OCI-LY7 (cell line): ENCODE measurements at regions of chr11 and their contacts with region 1.

Region 1: GRCh38 chr11:44731685-44732430 is 5.1 kb downstream of the TSPAN18 start:
- DNase-seq: no peak
- H3K4me3 ChIP-seq: no peak overlapping the region
- H3K27ac ChIP-seq: no peak overlapping the region
- H3K4me1 ChIP-seq: no peaks in the 10 kb centered on the region
- CTCF ChIP-seq: no peak

Region 2: GRCh38 chr11:44718612-44719390 is 13.1 kb before region 1 on chr11:
- CTCF ChIA-PET with region 1: no interaction called
- POLR2A ChIA-PET with region 1: no interaction called
- intact Hi-C with region 1: no loop called
- DNase-seq: no peak
- H3K4me3 ChIP-seq: no peak overlapping the region
- H3K27ac ChIP-seq: no peak overlapping the region
- H3K4me1 ChIP-seq: no peaks in the 10 kb centered on the region
- CTCF ChIP-seq: no peak

Region 3: DNA sequence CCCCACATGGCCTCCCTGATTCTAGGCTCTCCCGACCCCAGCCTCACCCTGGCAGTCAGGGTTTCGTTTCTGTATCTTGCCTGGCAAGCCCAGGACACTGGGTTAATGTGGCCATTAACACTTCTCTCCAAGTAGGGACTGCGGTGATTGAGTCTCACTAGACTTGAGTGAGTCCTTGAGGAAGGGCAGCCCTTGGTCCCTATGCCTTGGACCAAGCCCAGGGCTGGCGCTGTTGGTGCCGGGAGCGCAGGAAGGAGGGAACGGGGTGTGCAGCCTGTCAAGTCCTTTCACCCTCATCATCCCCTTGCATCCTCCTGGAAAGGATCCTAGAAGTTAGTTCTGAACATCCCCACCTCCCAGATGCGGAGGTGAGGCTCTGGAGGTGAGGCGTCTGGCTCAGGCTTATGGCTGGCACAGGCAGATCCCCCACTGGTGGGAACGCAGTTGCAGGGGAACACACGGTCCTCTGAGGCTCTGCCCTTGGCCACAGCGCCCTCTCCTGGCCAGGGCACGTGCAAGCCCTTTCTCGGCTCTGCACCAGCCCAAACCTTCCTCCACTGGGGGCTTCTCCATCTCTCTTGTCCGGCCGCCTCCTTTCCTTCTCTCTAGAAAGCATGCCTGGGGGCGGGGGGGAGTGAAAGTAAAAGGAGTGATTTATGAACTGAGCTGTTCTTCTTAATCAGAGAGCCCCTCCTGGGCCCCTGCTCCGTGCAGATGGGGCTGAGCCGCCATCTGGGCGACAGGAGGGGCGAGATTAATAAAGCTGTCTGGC is 162.2 kb after region 1 on chr11:
- CTCF ChIA-PET with region 1: no interaction called
- POLR2A ChIA-PET with region 1: no interaction called
- intact Hi-C with region 1: loop called (anchors 5 kb)
- DNase-seq: peak; percentile 57
- H3K4me3 ChIP-seq: no peak overlapping the region
- H3K27ac ChIP-seq: no peak overlapping the region
- H3K4me1 ChIP-seq: no peaks in the 10 kb centered on the region
- CTCF ChIP-seq: peak; percentile 82

Region 4: GRCh38 chr11:44977476-44977984 is 245.7 kb after region 1 on chr11:
- CTCF ChIA-PET with region 1: no interaction called
- POLR2A ChIA-PET with region 1: no interaction called
- intact Hi-C with region 1: no loop called
- DNase-seq: no peak
- H3K4me3 ChIP-seq: no peak overlapping the region
- H3K27ac ChIP-seq: no peak overlapping the region
- H3K4me1 ChIP-seq: peaks cover 18% of the 10 kb centered on the region
- CTCF ChIP-seq: peak; percentile 57

Region 5: GRCh38 chr11:44992181-44992582 is 260.3 kb after region 1 on chr11:
- CTCF ChIA-PET with region 1: no interaction called
- POLR2A ChIA-PET with region 1: no interaction called
- intact Hi-C with region 1: no loop called
- DNase-seq: no peak
- H3K4me3 ChIP-seq: no peak overlapping the region
- H3K27ac ChIP-seq: no peak overlapping the region
- H3K4me1 ChIP-seq: peaks cover 6% of the 10 kb centered on the region
- CTCF ChIP-seq: no peak

Region 6: DNA sequence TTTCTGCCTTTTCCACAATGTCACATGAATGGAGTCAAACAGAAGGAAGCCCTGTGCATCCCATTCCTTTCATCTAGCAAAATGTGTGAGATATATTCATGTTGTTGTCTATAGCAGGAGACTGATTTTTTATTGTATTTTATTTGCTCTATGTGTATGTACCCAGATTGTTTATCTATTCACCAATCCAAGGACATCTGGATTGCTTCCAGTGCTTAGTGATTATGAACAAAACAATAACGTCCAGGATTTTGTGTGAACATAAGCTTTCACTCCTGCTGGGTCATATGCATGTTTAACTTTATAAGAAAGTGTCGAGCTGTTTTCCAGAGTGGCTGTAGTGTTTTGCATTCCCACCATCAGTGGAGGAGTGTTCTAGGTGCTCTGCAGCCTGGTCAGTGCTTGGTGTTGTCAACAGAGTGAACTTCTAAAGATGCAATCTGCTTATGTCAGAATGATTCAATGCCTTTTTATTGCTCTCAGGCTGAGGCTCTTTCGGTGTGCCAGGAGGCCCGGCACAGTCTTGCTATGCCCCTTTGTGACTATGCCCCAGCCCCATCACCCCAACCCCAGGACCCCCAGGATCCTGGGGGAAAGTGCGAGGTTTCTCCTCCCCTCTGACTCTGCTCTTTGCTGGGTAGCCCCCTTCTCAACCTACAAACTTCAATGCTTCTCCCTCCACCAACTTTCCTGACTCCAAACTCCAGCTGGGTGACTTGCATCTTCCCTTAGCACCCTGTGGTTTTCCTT is 574.2 kb after region 1 on chr11:
- CTCF ChIA-PET with region 1: no interaction called
- POLR2A ChIA-PET with region 1: interaction called, 11 read pairs
- intact Hi-C with region 1: no loop called
- DNase-seq: no peak
- H3K4me3 ChIP-seq: no peak overlapping the region
- H3K27ac ChIP-seq: no peak overlapping the region
- H3K4me1 ChIP-seq: peaks cover 10% of the 10 kb centered on the region
- CTCF ChIP-seq: no peak